ENCODE measurements at regions of chr18 and their contacts with region 1.

Region 1: GRCh38 chr18:63180971-63181376 is 138.6 kb downstream of the BCL2 start:
- DNase-seq: no peak

Region 2: DNA sequence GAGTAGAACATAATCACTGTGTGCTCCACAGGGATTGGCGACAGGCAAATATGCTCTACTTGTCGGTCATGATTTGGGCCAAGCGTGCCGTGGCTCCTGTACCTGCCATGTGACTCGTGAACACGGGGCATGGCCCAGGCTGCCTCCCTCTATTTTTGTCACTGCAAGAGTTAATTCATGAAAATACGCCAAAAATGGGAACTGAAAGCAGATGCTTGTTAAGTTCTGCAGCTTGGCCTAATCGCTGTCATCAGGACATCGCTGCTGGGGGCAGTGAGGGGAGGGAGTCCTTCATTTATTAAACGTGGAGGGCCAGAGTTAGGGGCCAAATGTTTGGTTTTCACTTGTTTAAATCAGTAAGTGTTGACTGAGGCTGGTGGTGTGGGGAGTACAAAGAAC is 39.2 kb before region 1 on chr18:
- intact Hi-C with region 1: loop called (anchors 5 kb)
- DNase-seq: no peak

Region 3: GRCh38 chr18:63376538-63376937 is 195.6 kb after region 1 on chr18:
- intact Hi-C with region 1: no loop called
- DNase-seq: no peak

Measured in cardiac septum (tissue), 1 donor.